Dorsolateral prefrontal cortex (tissue), 120 donors: ENCODE measurements at regions of chr1 and their contacts with region 1.

Region 1: DNA sequence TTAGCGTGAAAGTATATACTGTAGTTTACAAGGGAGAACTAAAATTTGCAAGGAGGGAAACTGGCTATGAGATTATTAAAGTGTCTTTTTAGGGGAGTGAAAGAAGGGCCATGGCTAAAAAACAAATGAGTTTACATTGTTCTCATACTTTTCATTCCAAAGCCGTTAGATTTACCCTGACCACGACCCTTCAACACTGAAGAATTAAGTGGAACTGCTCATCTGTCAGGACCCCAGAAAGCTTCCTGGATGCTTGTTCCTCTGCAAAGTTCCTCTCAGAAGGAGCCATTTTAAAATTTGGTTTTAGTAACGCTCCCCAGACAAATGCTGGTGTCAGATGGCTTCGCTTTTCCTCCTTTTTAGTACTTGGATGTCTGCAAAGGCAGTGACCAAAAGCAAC is 82.7 kb upstream of the ZBTB18 start:
- DNase-seq: no peak
- H3K4me3 ChIP-seq: no peak overlapping the region
- H3K27ac ChIP-seq: no peak overlapping the region
- H3K27me3 ChIP-seq: no peaks in the 10 kb centered on the region
- CTCF ChIP-seq: no peak

Region 2: DNA sequence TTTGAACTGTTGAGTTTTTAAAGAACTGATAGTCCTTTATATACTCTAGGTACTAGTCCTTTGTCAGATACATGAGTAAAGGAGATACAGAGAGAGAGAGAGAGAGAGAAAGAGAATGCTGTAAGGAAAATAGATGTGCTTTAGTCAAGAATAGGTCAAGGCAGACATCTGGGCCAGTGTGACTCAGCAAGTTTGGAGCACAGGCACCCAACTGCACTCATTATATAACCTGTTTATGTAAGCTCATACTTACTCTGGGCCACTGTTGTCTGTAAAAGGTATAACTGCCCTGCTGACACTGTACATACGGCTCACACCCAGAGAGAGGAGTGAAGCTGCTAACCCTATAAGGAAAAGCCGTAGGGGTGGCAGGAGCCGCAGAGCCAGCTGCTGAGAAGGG is 86.1 kb before region 1 on chr1:
- intact Hi-C with region 1: no loop called
- DNase-seq: no peak
- H3K4me3 ChIP-seq: no peak overlapping the region
- H3K27ac ChIP-seq: no peak overlapping the region
- H3K27me3 ChIP-seq: no peaks in the 10 kb centered on the region
- CTCF ChIP-seq: no peak

Region 3: DNA sequence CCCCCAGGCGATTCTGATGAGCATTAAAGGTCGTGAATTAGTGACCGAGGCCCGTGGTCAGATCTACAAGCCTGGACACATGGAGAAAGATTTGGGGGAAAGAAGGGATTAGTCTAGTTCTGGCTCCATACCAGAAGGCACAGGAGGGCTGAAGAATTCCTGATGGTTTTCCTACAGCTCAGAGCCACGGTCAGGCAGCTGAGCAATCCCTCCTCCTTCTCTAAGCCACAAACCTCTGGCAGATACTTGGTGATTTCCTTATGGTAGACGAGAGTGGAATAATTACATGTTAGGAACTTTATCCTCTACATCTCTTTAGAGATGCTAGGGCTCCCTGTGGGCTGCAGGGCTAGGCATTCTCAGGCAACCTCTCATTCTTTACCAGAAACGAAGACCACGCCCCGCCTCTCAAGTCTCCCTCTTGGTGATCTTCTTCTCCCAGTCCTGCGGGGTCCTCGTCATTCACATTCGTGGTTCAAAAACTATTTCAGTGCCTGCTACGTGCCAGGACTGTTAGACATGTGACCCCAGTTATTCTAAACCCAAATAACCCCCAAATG is 62.1 kb after region 1 on chr1:
- intact Hi-C with region 1: loop called in 1 of 2 experiments (anchors 10 kb)
- DNase-seq: no peak
- H3K4me3 ChIP-seq: no peak overlapping the region
- H3K27ac ChIP-seq: no peak overlapping the region
- H3K27me3 ChIP-seq: no peaks in the 10 kb centered on the region
- CTCF ChIP-seq: no peak